Naive thymus-derived CD8-positive, alpha-beta T cell (primary cell): ENCODE measurements at regions of chr2 and their contacts with region 1.

Region 1: DNA sequence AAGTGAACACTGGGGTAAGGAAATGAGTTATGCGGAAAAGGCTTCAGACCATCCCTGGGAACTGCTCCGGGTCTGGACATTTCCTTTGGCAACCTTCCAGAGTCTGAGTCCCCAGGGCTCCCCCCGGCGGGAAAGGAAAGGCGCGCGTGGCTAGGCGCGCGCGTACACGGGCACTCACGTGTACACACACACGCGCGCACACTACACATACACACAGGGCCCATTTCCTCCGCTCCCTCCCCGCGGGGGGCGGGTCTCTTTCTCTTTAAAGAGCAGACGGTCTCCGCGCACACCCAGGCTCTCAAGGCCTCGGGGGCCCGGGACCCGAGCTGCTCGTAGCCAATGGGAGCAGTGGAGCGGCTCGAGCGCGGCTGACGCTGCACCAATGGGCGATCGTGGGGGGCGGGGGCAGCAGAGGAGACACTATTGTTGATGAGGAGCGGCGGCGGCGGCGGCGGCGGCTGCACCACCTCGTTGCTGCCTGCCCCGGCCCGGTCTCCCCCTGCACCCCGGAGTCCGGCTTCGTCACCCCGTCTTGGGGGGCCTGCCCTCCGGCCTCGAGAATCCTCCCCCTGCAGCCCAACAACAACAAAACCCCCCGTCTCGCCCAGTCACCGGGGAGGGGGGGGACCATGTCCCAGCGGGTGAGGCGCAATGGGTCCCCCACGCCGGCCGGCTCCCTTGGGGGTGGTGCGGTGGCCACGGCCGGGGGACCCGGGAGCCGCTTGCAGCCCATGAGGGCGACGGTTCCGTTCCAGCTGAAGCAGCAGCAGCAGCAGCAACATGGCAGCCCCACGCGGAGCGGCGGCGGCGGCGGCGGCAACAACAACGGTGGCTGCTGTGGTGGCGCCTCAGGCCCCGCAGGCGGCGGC is at the start of gene FAM117B:
- DNase-seq: peak; percentile 91 to 100 (median 98)
- ATAC-seq: peak; percentile 85 to 87
- H3K4me3 Mint-ChIP-seq: peak within 1 kb of the TSS; percentile 95 to 99 (median 97)
- H3K27ac Mint-ChIP-seq: peak within 1 kb of the TSS; percentile 96 to 100 (median 99)
- H3K4me1 Mint-ChIP-seq: peaks cover 28 to 62% (median 55%) of the 10 kb centered on the region in 4 donors
- H3K27me3 Mint-ChIP-seq: no peaks in the 10 kb centered on the region
- polyA plus RNA-seq, gene FAM117B: 11.0 to 24.4 (median 16.0) TPM

Region 2: DNA sequence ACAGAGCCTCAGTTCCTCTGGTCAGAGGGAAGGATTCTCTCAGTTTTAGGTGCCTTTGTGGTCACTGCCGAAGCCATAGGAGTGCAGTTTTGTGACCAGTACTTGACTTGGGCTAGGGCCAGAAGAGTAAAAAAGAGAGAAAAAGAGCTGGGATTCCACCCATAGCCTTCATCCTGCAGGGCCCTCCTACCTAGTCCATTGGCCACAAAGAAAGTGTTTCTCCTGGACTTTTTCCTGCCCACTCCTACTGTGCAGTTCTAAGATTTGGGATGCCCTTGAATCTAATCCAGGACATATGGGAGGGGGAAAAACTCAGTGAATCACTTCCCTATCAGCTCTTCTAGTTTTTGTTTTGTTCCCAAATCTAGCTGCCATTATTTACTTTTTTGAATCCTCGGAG is 26.0 kb after region 1 on chr2:
- POLR2A ChIA-PET with region 1: interaction called, 26 read pairs
- DNase-seq: no peak
- ATAC-seq: no peak
- H3K4me3 Mint-ChIP-seq: peak overlapping the region in 7 of 10 donors; percentile 8 to 65 (median 27)
- H3K27ac Mint-ChIP-seq: peak overlapping the region in 9 of 10 donors; percentile 31 to 96 (median 59)
- H3K4me1 Mint-ChIP-seq: peaks cover 36 to 88% (median 81%) of the 10 kb centered on the region in 4 donors
- H3K27me3 Mint-ChIP-seq: no peaks in the 10 kb centered on the region

Region 3: DNA sequence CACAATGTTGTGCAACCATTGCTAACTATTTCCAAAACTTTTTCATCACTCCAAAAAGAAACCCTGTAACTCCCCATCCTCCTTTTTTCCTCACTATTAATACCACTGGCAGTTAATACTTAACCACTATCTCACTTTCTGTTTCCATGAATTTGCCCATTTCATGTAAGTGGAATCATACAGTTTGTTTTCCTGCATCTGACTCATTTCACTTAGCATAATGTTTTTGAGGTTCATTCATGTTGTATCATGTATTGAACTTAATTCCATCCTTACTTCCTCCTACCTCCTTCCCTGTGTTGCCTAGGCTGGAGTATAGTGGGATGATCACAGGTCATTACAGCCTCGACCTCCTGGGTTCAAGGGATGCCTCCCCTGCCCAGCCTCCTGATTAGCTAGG is 68.3 kb after region 1 on chr2:
- POLR2A ChIA-PET with region 1: interaction called, 16 read pairs
- DNase-seq: no peak
- ATAC-seq: no peak
- H3K4me3 Mint-ChIP-seq: peak overlapping the region in 2 of 10 donors; percentile 8 to 44
- H3K27ac Mint-ChIP-seq: peak overlapping the region in 9 of 10 donors; percentile 2 to 87 (median 38)
- H3K4me1 Mint-ChIP-seq: peaks cover 30 to 69% (median 66%) of the 10 kb centered on the region in 4 donors
- H3K27me3 Mint-ChIP-seq: no peaks in the 10 kb centered on the region

Region 4: GRCh38 chr2:202750763-202751427 is 116.1 kb after region 1 on chr2:
- POLR2A ChIA-PET with region 1: interaction called, 34 read pairs
- DNase-seq: peak in 2 of 10 donors; percentile 16 to 31
- ATAC-seq: peak; percentile 46 to 59
- H3K4me3 Mint-ChIP-seq: peak overlapping the region; percentile 2 to 84 (median 62)
- H3K27ac Mint-ChIP-seq: peak overlapping the region; percentile 32 to 96 (median 88)
- H3K4me1 Mint-ChIP-seq: peaks cover 37 to 82% (median 60%) of the 10 kb centered on the region in 4 donors
- H3K27me3 Mint-ChIP-seq: no peaks in the 10 kb centered on the region

Region 5: DNA sequence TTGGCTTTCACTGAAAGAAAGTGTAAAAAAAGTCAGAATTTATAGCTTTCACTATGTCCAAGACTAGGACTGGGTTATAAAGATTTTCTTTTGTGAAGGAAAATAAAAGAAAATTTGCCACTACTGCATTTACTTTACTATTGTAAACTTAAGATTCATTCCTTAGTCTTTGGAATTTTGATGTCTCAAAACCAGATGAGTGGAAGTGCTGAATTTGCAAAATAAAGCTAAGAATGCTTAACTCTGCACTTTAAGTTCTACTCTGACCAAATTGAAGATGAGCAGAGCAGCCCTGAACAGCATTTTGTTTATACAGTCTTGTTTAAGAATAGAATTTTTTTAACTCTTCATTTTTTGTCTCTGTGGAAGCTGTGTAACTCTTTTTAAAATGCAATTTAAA is 134.4 kb after region 1 on chr2:
- POLR2A ChIA-PET with region 1: interaction called, 47 read pairs
- DNase-seq: no peak
- ATAC-seq: no peak
- H3K4me3 Mint-ChIP-seq: peak overlapping the region in 2 of 10 donors; percentile 56 to 73
- H3K27ac Mint-ChIP-seq: peak overlapping the region in 5 of 10 donors; percentile 72 to 89 (median 74)
- H3K4me1 Mint-ChIP-seq: peaks cover 16 to 45% (median 31%) of the 10 kb centered on the region in 4 donors
- H3K27me3 Mint-ChIP-seq: no peaks in the 10 kb centered on the region

Region 6: GRCh38 chr2:202911512-202912341 is 276.9 kb after region 1 on chr2 and contains the starts of genes CARF and WDR12:
- POLR2A ChIA-PET with region 1: interaction called, 14 read pairs
- DNase-seq: peak; percentile 82 to 95 (median 89)
- ATAC-seq: peak; percentile 83
- H3K4me3 Mint-ChIP-seq: peak within 1 kb of the TSS; percentile 90 to 100 (median 98)
- H3K27ac Mint-ChIP-seq: peak within 1 kb of the TSS; percentile 94 to 99 (median 98)
- H3K4me1 Mint-ChIP-seq: peaks cover 15 to 40% (median 31%) of the 10 kb centered on the region in 4 donors
- H3K27me3 Mint-ChIP-seq: no peaks in the 10 kb centered on the region
- polyA plus RNA-seq, gene CARF: 4.1 to 10.1 (median 7.7) TPM
- polyA plus RNA-seq, gene WDR12: 13.5 to 19.6 (median 16.9) TPM